WTC11 (cell line): ENCODE measurements at regions of chr3 and their contacts with region 1.

Region 1: GRCh38 chr3:132210476-132211346 is 106.5 kb upstream of the ACP3 start:
- DNase-seq: peak; percentile 77
- ATAC-seq: peak; percentile 95
- H3K4me3 Mint-ChIP-seq: no peak overlapping the region
- H3K27ac Mint-ChIP-seq: no peak overlapping the region
- H3K4me1 Mint-ChIP-seq: peaks cover 18% of the 10 kb centered on the region
- H3K27me3 Mint-ChIP-seq: peaks cover 60% of the 10 kb centered on the region
- CTCF ChIP-seq: peak; percentile 67

Region 2: GRCh38 chr3:131794766-131795388 is 415.8 kb before region 1 on chr3:
- CTCF ChIA-PET with region 1: interaction called, 11 read pairs
- POLR2A ChIA-PET with region 1: no interaction called
- DNase-seq: peak; percentile 37
- ATAC-seq: peak; percentile 89
- H3K4me3 Mint-ChIP-seq: no peak overlapping the region
- H3K27ac Mint-ChIP-seq: no peak overlapping the region
- H3K4me1 Mint-ChIP-seq: peaks cover 38% of the 10 kb centered on the region
- H3K27me3 Mint-ChIP-seq: peaks cover 15% of the 10 kb centered on the region
- CTCF ChIP-seq: peak; percentile 77

Region 3: DNA sequence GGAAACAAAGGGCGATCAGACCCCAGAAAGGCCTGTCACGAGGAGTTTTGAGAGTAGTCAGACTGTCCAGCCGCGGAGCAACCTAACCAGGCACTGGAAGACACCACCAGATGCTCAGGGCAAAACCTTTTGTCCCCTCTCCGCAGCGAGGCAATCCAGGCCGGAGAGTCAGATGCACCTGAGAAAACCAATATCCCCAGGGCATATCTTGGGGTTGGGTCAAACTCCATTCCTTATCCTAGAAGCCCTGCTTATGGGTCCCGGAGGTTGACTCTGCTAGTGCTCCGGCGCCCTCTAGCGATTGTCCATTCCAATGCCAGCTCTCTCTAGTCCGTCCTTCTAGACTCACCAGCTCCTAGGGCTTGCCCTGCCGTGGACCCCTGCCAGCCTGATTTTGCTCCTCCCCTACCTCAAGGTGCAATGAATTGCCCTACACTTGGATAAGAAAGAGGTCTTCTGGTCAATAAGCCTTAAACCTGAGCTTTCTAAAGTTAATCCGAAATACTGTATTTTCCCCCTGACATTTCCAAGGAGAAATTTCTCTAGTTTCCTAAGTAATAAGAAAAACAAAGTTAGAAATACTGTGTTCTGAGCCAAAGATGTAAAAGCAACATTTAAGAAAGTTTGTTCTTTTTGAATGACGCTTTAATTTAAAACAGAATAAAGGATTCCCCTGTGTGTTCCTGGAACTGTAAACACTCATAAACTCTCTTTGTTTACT is 181.4 kb before region 1 on chr3:
- CTCF ChIA-PET with region 1: interaction called, 36 read pairs
- POLR2A ChIA-PET with region 1: no interaction called
- DNase-seq: peak; percentile 98
- ATAC-seq: peak; percentile 98
- H3K4me3 Mint-ChIP-seq: no peak overlapping the region
- H3K27ac Mint-ChIP-seq: no peak overlapping the region
- H3K4me1 Mint-ChIP-seq: peaks cover 21% of the 10 kb centered on the region
- H3K27me3 Mint-ChIP-seq: peaks cover 23% of the 10 kb centered on the region
- CTCF ChIP-seq: peak; percentile 75

Region 4: DNA sequence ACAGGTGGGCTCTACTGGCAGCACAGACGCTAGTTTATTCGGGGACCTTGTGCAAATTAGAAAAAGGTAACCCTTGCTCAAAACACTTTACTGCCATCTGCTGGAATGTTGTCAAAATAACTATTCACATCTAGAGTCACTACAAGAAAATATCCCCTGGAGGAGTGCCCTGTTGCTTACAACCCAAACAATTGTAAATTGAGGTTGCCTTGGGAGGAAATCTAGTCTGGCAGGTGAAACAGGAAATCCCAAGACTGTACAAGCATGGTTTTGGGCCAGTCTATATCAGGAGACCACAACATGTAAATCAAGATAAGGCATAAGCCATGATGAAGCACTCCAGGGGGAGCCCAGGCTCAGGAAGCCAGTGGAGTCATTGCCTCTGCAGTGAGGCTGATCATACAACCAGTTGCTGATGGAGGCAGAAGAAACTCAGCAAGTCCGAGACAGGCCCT is 30.3 kb before region 1 on chr3:
- CTCF ChIA-PET with region 1: interaction called, 10 read pairs
- POLR2A ChIA-PET with region 1: no interaction called
- DNase-seq: no peak
- ATAC-seq: peak; percentile 94
- H3K4me3 Mint-ChIP-seq: no peak overlapping the region
- H3K27ac Mint-ChIP-seq: peak overlapping the region; percentile 21; the same call in 1 of the 2 replicates
- H3K4me1 Mint-ChIP-seq: peaks cover 11% of the 10 kb centered on the region
- H3K27me3 Mint-ChIP-seq: no peaks in the 10 kb centered on the region
- CTCF ChIP-seq: peak; percentile 55

Region 5: DNA sequence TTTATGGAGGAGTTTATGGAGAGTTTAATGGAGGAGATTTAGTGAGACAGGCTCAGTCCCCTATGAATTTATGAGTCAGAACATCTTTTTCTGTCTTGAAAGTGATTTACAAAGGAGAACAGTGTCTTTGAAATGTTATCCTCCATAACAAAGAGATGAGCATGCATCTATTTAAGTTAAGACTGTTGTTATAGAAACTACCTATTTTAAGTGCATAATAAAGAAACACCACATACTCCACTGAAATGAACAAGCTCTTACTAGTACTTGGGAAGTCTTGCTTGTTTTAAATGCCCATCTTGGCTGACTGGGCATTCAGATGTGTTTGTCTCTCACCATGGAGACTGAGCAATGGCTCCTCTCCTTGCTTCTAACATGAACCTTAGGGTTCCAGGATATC is 12.2 kb before region 1 on chr3:
- CTCF ChIA-PET with region 1: interaction called, 15 read pairs
- POLR2A ChIA-PET with region 1: no interaction called
- DNase-seq: no peak
- ATAC-seq: no peak
- H3K4me3 Mint-ChIP-seq: no peak overlapping the region
- H3K27ac Mint-ChIP-seq: no peak overlapping the region
- H3K4me1 Mint-ChIP-seq: peaks cover 13% of the 10 kb centered on the region
- H3K27me3 Mint-ChIP-seq: no peaks in the 10 kb centered on the region; the same call in 1 of the 2 replicates
- CTCF ChIP-seq: no peak

Region 6: GRCh38 chr3:132222868-132223538 is 12.3 kb after region 1 on chr3:
- CTCF ChIA-PET with region 1: interaction called, 37 read pairs
- POLR2A ChIA-PET with region 1: no interaction called
- DNase-seq: no peak
- ATAC-seq: peak; percentile 44
- H3K4me3 Mint-ChIP-seq: no peak overlapping the region
- H3K27ac Mint-ChIP-seq: no peak overlapping the region
- H3K4me1 Mint-ChIP-seq: peaks cover 28% of the 10 kb centered on the region
- H3K27me3 Mint-ChIP-seq: no peaks in the 10 kb centered on the region
- CTCF ChIP-seq: no peak

Region 7: GRCh38 chr3:132290833-132291232 is 80.1 kb after region 1 on chr3:
- CTCF ChIA-PET with region 1: no interaction called
- POLR2A ChIA-PET with region 1: no interaction called
- DNase-seq: no peak
- ATAC-seq: no peak
- H3K4me3 Mint-ChIP-seq: no peak overlapping the region
- H3K27ac Mint-ChIP-seq: no peak overlapping the region
- H3K4me1 Mint-ChIP-seq: peaks cover 17% of the 10 kb centered on the region
- H3K27me3 Mint-ChIP-seq: no peaks in the 10 kb centered on the region; the same call in 1 of the 2 replicates
- CTCF ChIP-seq: no peak

Region 8: DNA sequence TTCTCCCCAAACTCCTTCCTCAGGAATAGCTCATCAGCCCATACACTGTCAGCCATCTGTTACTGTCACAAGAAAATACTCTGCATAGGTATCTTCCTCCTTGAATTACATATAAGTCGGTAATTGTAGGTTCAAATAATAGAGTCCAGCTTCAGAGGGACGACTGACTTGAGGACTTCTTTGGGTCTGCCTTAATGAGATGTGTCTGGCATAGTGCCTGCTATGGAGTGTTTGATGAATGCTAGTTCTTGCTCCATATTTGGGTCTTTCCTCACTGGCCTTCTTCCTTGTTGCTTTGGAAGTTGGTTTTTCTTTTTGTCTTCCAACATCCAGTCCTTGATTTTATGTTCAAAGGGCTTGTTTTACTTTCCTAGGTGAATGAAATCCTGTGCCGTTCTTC is 319.9 kb after region 1 on chr3:
- CTCF ChIA-PET with region 1: no interaction called
- POLR2A ChIA-PET with region 1: no interaction called
- DNase-seq: no peak
- ATAC-seq: no peak
- H3K4me3 Mint-ChIP-seq: no peak overlapping the region
- H3K27ac Mint-ChIP-seq: no peak overlapping the region
- H3K4me1 Mint-ChIP-seq: peaks cover 4% of the 10 kb centered on the region
- H3K27me3 Mint-ChIP-seq: no peaks in the 10 kb centered on the region
- CTCF ChIP-seq: no peak